Mammary epithelial cell (primary cell): ENCODE measurements at regions of chr5 and their contacts with region 1.

Region 1: GRCh38 chr5:141641634-141642267 is 5.0 kb downstream of the RELL2 start:
- DNase-seq: peak; percentile 81
- H3K4me3 ChIP-seq: no peak overlapping the region
- H3K27ac ChIP-seq: no peak overlapping the region
- H3K4me1 ChIP-seq: peaks cover 30% of the 10 kb centered on the region
- H3K27me3 ChIP-seq: no peaks in the 10 kb centered on the region
- CTCF ChIP-seq: peak; percentile 44 to 45

Region 2: GRCh38 chr5:141597394-141597793 is 44.4 kb before region 1 on chr5:
- CTCF ChIA-PET with region 1: interaction called, 11 read pairs
- dilution Hi-C with region 1: no loop called
- in situ Hi-C with region 1: no loop called
- intact Hi-C with region 1: loop called (anchors 1 kb)
- DNase-seq: peak; percentile 39
- H3K4me3 ChIP-seq: no peak overlapping the region
- H3K27ac ChIP-seq: no peak overlapping the region
- H3K4me1 ChIP-seq: peaks cover 15% of the 10 kb centered on the region
- H3K27me3 ChIP-seq: no peaks in the 10 kb centered on the region
- CTCF ChIP-seq: no peak

Region 3: DNA sequence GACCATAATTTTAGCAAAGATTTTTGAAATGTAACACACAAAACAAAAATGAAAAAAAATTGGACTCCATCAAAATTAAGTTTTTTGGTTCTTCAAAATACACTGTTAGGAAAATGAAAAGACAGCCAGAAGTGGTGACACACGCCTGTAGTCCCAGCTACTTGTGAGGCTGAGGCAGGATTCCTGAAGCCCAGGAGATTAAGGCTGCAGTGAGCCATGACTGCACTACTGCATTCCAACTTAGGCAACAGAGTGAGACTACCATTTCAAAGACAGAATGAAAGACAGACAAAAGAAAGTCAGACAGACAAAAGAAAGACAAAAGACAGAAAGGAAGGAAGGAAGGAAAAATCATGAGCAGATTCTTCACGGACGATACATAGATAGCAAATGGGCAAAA is 30.5 kb before region 1 on chr5:
- CTCF ChIA-PET with region 1: no interaction called
- dilution Hi-C with region 1: no loop called
- in situ Hi-C with region 1: no loop called
- intact Hi-C with region 1: no loop called
- DNase-seq: no peak
- H3K4me3 ChIP-seq: no peak overlapping the region
- H3K27ac ChIP-seq: no peak overlapping the region
- H3K4me1 ChIP-seq: peaks cover 8% of the 10 kb centered on the region
- H3K27me3 ChIP-seq: no peaks in the 10 kb centered on the region
- CTCF ChIP-seq: no peak